GM13976 (cell line): ENCODE measurements at regions of chr4 and their contacts with region 1.

Region 1: GRCh38 chr4:106201373-106201772 is 114.6 kb downstream of the TBCK start:
- DNase-seq: no peak
- CTCF ChIP-seq: peak; percentile 34

Region 2: DNA sequence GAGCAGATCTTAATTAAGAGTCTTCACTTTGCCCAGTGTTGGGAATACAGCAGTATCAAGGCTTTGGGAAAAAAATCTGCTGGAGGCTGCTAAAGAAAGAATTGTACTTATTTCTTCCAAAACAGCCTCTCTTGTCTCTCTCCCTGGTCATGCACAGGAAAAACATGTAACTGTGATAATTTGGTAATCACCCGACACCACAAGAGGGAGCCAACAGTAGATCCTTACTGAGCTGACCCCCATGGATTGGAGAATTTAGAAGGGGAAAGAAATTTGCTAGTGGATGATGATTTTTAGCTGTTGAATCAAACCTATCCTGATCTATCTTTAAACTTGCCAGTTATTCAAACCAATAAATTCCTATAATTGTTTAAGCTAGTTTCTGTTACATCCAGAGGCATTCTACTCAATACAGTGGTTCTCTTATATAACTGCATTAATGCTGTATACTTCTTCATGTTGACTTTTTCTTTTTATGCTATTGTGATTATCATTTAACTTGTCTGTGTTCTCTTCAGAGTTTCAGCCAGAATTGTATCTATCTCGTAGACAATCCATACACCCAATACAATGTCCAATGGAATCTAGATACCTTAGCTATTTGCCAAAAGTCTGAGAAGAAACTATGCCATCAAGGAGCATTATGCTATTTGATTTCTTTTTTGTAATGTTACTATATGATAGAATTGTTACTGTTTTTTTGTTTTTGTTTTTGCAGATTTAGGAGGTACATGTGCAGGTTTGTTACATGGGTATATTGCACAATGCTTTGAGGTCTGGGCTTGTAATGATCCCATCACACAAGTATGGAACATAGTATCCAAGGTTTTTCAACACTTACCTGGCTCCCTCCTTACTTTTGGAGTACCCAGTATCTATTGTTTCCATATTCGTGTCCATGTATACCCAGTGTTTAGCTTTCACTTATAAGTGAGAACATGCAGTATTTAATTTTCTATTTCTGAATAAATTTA is 680.3 kb before region 1 on chr4:
- in situ Hi-C with region 1: loop called (anchors 25 kb)
- DNase-seq: peak; percentile 65
- CTCF ChIP-seq: peak; percentile 59